ENCODE measurements at regions of chr15 and their contacts with region 1.

Region 1: GRCh38 chr15:64825431-64826294 is at the start of gene PIF1:
- DNase-seq: peak; percentile 94
- H3K4me3 ChIP-seq: peak within 1 kb of the TSS; percentile 63 to 75
- H3K27ac ChIP-seq: peak within 1 kb of the TSS; percentile 59 to 91
- H3K4me1 ChIP-seq: peaks cover 0 to 16% of the 10 kb centered on the region in 2 experiments; a peak in 1 of 4 replicates
- H3K27me3 ChIP-seq: no peaks in the 10 kb centered on the region
- CTCF ChIP-seq: no peak
- EP300 ChIP-seq: peak in 1 of 2 experiments; percentile 51; a peak in 1 of 4 replicates
- RAD21 ChIP-seq: peak; percentile 20; the same call in 1 of the 2 replicates
- polyA plus RNA-seq, gene PIF1: 12.1 and 12.4 TPM in 2 replicates

Region 2: GRCh38 chr15:64841258-64842095 is 15.8 kb after region 1 on chr15 and contains the start of gene PLEKHO2:
- CTCF ChIA-PET with region 1: interaction called, 3 read pairs
- POLR2A ChIA-PET with region 1: interaction called, 20 read pairs
- DNase-seq: peak; percentile 97
- H3K4me3 ChIP-seq: peak within 1 kb of the TSS; percentile 78 to 87
- H3K27ac ChIP-seq: peak within 1 kb of the TSS; percentile 86 to 88
- H3K4me1 ChIP-seq: peaks cover 29 to 43% of the 10 kb centered on the region in 2 experiments
- H3K27me3 ChIP-seq: no peaks in the 10 kb centered on the region
- CTCF ChIP-seq: peak; percentile 22; the same call in 1 of the 2 replicates
- EP300 ChIP-seq: peak in 1 of 2 experiments; percentile 15; a peak in 1 of 4 replicates
- RAD21 ChIP-seq: peak; percentile 9; the same call in 1 of the 2 replicates
- polyA plus RNA-seq, gene PLEKHO2: 6.8 and 7.8 TPM in 2 replicates

Measured in SK-N-SH (cell line).